ENCODE measurements at regions of chr18 and their contacts with region 1.

Region 1: GRCh38 chr18:76803814-76804213 is 18.5 kb upstream of the ZNF236 start:
- DNase-seq: no peak
- ATAC-seq: peak; percentile 61

Region 2: DNA sequence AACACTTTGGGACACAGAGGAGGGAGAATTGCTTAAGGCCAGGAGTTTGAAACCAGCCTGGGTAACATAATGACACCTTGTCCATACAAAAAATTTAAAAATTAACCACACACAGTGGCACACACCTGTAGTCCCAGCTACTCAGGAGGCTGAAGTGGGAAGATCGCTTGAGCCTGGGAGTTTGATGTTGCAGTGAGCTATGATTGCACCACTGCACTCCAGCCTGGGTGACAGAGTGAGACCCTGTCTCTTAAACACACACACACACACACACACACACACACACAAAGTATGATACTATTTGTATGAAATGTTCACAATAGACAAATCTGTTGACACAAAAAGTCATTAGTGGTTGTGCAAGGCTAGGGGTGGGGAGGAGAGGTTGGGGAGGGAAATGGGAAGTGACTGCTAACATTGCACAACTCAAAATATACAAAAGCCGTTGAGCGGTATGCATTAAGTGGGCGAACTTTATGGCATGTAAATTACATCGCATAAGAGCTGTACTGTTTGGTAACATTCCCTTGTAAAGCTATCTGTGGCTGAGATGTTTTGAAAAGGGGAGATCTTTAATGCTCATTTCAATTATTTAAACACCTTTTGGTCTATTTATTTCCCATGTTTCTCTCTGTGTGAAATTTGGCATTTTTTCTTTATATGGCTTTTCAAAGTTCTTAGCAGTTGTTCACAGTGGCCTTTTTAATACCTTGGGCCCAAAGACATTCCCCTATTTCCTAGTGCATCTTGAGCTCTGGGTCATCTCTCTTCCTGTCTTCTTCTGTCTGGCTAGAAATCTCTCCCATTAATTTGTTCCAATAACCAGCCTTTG is 249.9 kb before region 1 on chr18:
- intact Hi-C with region 1: no loop called
- DNase-seq: no peak
- ATAC-seq: peak; percentile 51

Region 3: GRCh38 chr18:76709659-76710645 is 93.9 kb before region 1 on chr18:
- intact Hi-C with region 1: no loop called
- DNase-seq: peak; percentile 81
- ATAC-seq: peak; percentile 94

Region 4: DNA sequence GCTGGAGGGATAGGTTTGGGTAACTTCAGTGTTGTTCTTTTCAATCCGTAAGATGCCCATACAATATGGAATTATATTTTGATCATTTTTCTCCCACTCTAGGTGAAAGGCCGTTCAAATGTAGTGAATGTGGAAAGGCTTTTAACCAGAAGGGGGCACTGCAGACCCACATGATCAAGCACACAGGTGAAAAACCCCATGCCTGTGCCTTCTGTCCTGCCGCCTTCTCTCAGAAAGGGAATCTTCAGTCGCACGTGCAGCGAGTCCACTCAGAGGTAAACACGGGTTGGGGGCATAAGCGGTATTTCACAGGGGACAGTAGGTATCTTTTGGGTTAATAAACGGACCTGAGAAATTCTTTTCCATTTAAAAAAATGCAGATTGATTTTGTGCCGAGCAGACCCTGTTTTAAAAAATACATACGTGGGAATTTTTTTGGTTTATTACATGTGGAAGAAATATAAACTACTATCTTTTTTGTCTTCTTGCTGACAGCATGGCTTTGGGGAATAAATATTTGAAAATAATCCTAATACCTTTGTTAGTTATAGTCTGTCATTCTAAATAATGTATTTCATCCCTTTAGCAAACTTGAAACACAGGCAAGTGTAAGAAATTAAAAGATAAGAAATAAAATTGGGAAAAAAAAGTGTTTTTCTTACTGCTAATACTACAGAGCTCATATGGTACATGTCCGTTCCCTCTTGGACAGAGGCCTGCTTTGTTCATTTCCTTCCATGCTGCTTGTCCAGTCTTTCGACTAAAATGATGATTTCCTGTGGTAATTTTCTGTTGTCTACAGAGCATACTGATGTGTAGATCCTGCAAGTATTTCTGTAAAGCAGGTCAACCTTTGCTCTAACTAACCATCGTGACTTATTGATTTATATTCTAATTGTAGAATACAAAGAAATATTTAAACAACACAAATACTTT is 71.8 kb after region 1 on chr18:
- intact Hi-C with region 1: loop called (anchors 10 kb)
- DNase-seq: no peak
- ATAC-seq: no peak

Region 5: GRCh38 chr18:76886112-76886511 is 82.3 kb after region 1 on chr18:
- intact Hi-C with region 1: no loop called
- DNase-seq: peak; percentile 12
- ATAC-seq: no peak

Region 6: DNA sequence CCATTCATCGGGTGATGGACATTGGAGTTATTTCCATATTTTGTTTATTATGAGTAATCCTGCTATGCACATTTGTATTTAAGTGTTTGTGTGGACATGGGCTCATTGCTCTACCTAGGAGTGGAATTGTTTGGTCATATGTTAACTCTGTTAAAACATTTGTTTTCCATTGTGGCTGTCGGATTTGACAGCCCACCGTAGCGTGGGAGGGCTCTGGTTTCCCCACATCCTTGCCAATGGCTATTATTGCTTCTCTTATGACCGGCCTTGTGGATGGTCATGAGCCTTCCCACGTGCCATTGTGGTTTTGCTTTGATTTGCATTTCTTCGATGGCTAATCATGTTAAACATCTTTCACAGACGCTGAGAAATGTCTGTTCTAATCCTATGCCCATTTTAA is 110.5 kb after region 1 on chr18:
- intact Hi-C with region 1: loop called (anchors 10 kb)
- DNase-seq: no peak
- ATAC-seq: no peak

Region 7: GRCh38 chr18:76982841-76983587 is 179.2 kb after region 1 on chr18:
- intact Hi-C with region 1: loop called (anchors 2 kb)
- DNase-seq: peak; percentile 90
- ATAC-seq: peak; percentile 87

Measured in Right ventricle myocardium superior (tissue), 1 donor.